ENCODE measurements at regions of chr3 and their contacts with region 1.

Region 1: GRCh38 chr3:151168269-151169094 is 34.5 kb downstream of the GPR171 start:
- DNase-seq: peak; percentile 75 to 84
- H3K4me3 ChIP-seq: no peak overlapping the region
- H3K4me3 Mint-ChIP-seq: no peak overlapping the region
- H3K27ac Mint-ChIP-seq: no peak overlapping the region
- H3K4me1 ChIP-seq: no peaks in the 10 kb centered on the region
- H3K4me1 Mint-ChIP-seq: peaks cover 6% of the 10 kb centered on the region
- H3K27me3 ChIP-seq: no peaks in the 10 kb centered on the region
- H3K27me3 Mint-ChIP-seq: no peaks in the 10 kb centered on the region
- CTCF ChIP-seq: peak; percentile 89 to 94

Region 2: GRCh38 chr3:151210676-151211381 is 42.3 kb after region 1 on chr3:
- CTCF ChIA-PET with region 1: no interaction called
- POLR2A ChIA-PET with region 1: no interaction called
- intact Hi-C with region 1: loop called (anchors 5 kb)
- DNase-seq: no peak
- H3K4me3 ChIP-seq: no peak overlapping the region
- H3K4me3 Mint-ChIP-seq: no peak overlapping the region
- H3K27ac Mint-ChIP-seq: peak overlapping the region; percentile 72
- H3K4me1 ChIP-seq: peaks cover 18% of the 10 kb centered on the region
- H3K4me1 Mint-ChIP-seq: peaks cover 5% of the 10 kb centered on the region
- H3K27me3 ChIP-seq: no peaks in the 10 kb centered on the region
- H3K27me3 Mint-ChIP-seq: no peaks in the 10 kb centered on the region
- CTCF ChIP-seq: peak in 1 of 2 experiments; percentile 12

Region 3: GRCh38 chr3:151282921-151283320 is 114.4 kb after region 1 on chr3:
- CTCF ChIA-PET with region 1: no interaction called
- POLR2A ChIA-PET with region 1: no interaction called
- intact Hi-C with region 1: loop called (anchors 1 kb)
- DNase-seq: peak in 1 of 2 experiments; percentile 44
- H3K4me3 ChIP-seq: no peak overlapping the region
- H3K4me3 Mint-ChIP-seq: no peak overlapping the region
- H3K27ac Mint-ChIP-seq: no peak overlapping the region
- H3K4me1 ChIP-seq: peaks cover 9% of the 10 kb centered on the region
- H3K4me1 Mint-ChIP-seq: peaks cover 7% of the 10 kb centered on the region
- H3K27me3 ChIP-seq: no peaks in the 10 kb centered on the region
- H3K27me3 Mint-ChIP-seq: no peaks in the 10 kb centered on the region
- CTCF ChIP-seq: peak; percentile 56 to 60

Region 4: DNA sequence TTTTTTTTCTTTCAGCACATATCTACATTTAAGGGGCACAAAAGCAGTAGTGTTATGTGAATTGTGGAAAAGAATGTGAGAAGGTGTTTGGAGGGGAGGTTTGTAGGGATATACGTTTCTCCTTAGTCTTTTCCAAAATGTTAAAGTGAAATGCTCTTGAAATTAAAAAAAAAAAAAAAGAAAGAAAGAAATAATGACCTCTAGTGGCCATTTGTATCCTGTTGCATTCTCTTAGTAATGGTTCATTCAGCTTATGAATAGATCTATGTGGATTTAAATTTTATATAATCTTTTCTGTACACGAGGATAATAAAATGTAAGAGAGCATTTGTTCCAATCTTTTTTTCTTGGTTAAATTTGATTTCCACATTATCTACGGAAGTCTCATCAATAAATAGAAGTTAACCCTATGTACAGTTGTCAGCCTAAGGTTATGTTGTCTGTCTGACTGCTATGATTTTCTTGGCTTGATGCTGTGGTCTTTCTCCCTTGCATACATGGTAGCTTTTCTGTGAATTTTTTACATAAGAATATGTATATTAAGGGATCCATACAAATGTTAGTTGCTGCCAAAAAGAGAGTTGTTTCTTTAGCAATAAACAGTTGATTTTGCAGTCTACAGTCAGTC is 159.2 kb after region 1 on chr3:
- CTCF ChIA-PET with region 1: no interaction called
- POLR2A ChIA-PET with region 1: no interaction called
- intact Hi-C with region 1: loop called (anchors 2 kb)
- DNase-seq: no peak
- H3K4me3 ChIP-seq: no peak overlapping the region
- H3K4me3 Mint-ChIP-seq: no peak overlapping the region
- H3K27ac Mint-ChIP-seq: no peak overlapping the region
- H3K4me1 ChIP-seq: no peaks in the 10 kb centered on the region
- H3K4me1 Mint-ChIP-seq: no peaks in the 10 kb centered on the region
- H3K27me3 ChIP-seq: no peaks in the 10 kb centered on the region
- H3K27me3 Mint-ChIP-seq: no peaks in the 10 kb centered on the region
- CTCF ChIP-seq: peak; percentile 52 to 59

Measured in Caco-2 (cell line).